HCT116 (cell line): ENCODE measurements at regions of chr9 and their contacts with region 1.

Region 1: DNA sequence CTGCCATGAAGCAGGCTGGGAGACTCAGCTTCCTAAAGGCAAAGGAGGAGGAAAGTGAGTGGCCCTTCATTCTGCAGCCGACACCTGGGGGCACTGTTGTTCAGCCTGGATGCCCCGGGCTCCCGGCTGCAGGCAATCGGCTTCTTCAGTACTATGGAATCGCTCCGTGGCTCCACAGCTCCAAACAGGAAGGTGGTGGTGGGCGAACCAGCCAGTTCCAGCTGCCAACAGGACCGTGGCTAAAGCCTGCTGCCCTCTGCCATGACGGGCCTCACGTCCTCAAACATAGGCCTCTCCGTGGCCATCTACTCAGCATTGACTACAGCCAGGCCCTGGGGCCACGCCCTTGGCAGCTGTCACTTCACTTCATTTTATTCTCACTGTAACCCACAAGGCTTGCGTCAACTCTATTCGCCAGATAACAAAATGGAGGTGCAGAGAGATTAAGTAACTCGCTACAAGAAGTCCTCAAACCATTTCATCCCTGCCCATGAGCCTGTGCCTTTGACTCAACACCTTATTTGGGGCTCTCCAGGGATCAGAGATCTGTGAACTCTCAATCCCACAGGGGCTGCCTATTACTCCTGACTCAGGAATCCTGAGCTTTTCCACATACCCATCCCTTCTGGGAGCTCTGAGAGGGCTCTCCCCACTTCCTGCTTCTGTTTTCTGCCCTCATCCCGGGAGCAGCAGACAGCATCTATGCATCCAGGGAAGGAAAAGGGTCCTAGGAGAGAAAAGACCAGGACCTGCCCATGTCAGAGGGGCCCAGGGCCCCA is 38.0 kb downstream of the PAX5 start:
- DNase-seq: peak; percentile 32
- ATAC-seq: peak; percentile 93
- H3K4me3 ChIP-seq: peak overlapping the region in 1 of 2 experiments; percentile 21; a peak in 2 of 4 replicates
- H3K27ac ChIP-seq: no peak overlapping the region
- H3K4me1 ChIP-seq: peaks cover 0 to 5% of the 10 kb centered on the region in 2 experiments; a peak in 2 of 4 replicates
- H3K27me3 ChIP-seq: no peaks in the 10 kb centered on the region
- CTCF ChIP-seq: peak; percentile 79 to 86 (median 83)
- POLR2A ChIP-seq: no peak
- RAD21 ChIP-seq: peak; percentile 94

Region 2: DNA sequence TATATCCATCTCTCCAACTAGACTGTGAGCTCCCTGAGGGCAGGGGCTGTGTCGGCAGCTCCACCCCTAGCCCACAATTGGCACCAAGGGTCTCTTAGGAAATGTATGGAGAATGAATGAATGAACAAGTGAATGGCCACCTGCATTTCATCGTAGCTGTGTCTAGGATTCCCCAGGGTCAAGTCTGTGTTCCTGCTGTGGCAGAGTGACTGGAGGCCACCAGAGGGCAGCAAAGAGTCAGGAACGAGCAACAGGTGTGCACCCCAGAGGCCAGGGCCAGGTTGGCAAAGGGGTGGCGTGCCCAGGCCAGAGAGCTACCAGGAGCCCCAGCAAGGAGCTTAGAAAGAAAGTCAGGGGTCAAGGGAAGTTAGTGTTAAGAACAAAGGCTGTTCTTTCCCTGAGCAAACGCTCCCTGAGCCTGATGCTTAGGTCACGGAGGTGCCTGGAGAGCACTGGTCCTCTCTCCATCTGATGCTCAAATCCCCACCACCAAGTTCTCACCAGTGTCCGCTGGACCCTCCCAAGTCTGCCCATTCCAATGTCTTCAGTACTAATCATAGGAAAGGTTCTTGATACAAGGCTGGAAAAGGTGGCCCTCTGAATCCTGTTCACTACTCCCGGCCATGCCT is 122.8 kb before region 1 on chr9:
- CTCF ChIA-PET with region 1: interaction called, 148 read pairs
- POLR2A ChIA-PET with region 1: interaction called, 3 read pairs
- RAD21 ChIA-PET with region 1: interaction called, 15 to 16 read pairs
- intact Hi-C with region 1: loop called (anchors 1 kb)
- DNase-seq: peak; percentile 43
- ATAC-seq: peak; percentile 99
- H3K4me3 ChIP-seq: no peak overlapping the region
- H3K27ac ChIP-seq: no peak overlapping the region
- H3K4me1 ChIP-seq: no peaks in the 10 kb centered on the region
- H3K27me3 ChIP-seq: peaks cover 18% of the 10 kb centered on the region; the same call in 1 of the 2 replicates
- CTCF ChIP-seq: peak; percentile 91 to 96 (median 92)
- POLR2A ChIP-seq: no peak
- RAD21 ChIP-seq: peak; percentile 97

Region 3: GRCh38 chr9:37239224-37239859 is 243.2 kb after region 1 on chr9:
- CTCF ChIA-PET with region 1: no interaction called
- POLR2A ChIA-PET with region 1: no interaction called
- RAD21 ChIA-PET with region 1: no interaction called
- intact Hi-C with region 1: no loop called
- DNase-seq: no peak
- ATAC-seq: no peak
- H3K4me3 ChIP-seq: no peak overlapping the region
- H3K27ac ChIP-seq: no peak overlapping the region
- H3K4me1 ChIP-seq: peaks cover 0 to 5% of the 10 kb centered on the region in 2 experiments; a peak in 2 of 4 replicates
- H3K27me3 ChIP-seq: no peaks in the 10 kb centered on the region
- CTCF ChIP-seq: no peak
- POLR2A ChIP-seq: no peak
- RAD21 ChIP-seq: no peak

Region 4: GRCh38 chr9:37262410-37262809 is 266.3 kb after region 1 on chr9:
- CTCF ChIA-PET with region 1: interaction called, 6 read pairs
- POLR2A ChIA-PET with region 1: no interaction called
- RAD21 ChIA-PET with region 1: no interaction called
- intact Hi-C with region 1: loop called (anchors 2 kb)
- DNase-seq: no peak
- ATAC-seq: no peak
- H3K4me3 ChIP-seq: no peak overlapping the region
- H3K27ac ChIP-seq: no peak overlapping the region
- H3K4me1 ChIP-seq: no peaks in the 10 kb centered on the region
- H3K27me3 ChIP-seq: no peaks in the 10 kb centered on the region
- CTCF ChIP-seq: peak; percentile 37 to 53 (median 43); a peak in 5 of 6 replicates
- POLR2A ChIP-seq: no peak
- RAD21 ChIP-seq: peak; percentile 59

Region 5: GRCh38 chr9:37364751-37365360 is 368.7 kb after region 1 on chr9:
- CTCF ChIA-PET with region 1: interaction called, 11 read pairs
- POLR2A ChIA-PET with region 1: no interaction called
- RAD21 ChIA-PET with region 1: interaction called in 1 of 2 experiments, 4 read pairs
- intact Hi-C with region 1: no loop called
- DNase-seq: no peak
- ATAC-seq: peak; percentile 89
- H3K4me3 ChIP-seq: no peak overlapping the region
- H3K27ac ChIP-seq: no peak overlapping the region
- H3K4me1 ChIP-seq: no peaks in the 10 kb centered on the region
- H3K27me3 ChIP-seq: no peaks in the 10 kb centered on the region
- CTCF ChIP-seq: peak in 2 of 3 experiments; percentile 42 to 52; a peak in 4 of 6 replicates
- POLR2A ChIP-seq: no peak
- RAD21 ChIP-seq: peak; percentile 54

Region 6: GRCh38 chr9:37410969-37411785 is 415.1 kb after region 1 on chr9:
- CTCF ChIA-PET with region 1: interaction called, 35 read pairs
- POLR2A ChIA-PET with region 1: no interaction called
- RAD21 ChIA-PET with region 1: interaction called in 1 of 2 experiments, 3 read pairs
- intact Hi-C with region 1: loop called (anchors 1 kb)
- DNase-seq: no peak
- ATAC-seq: peak; percentile 51
- H3K4me3 ChIP-seq: no peak overlapping the region
- H3K27ac ChIP-seq: no peak overlapping the region
- H3K4me1 ChIP-seq: peaks cover 0 to 25% of the 10 kb centered on the region in 2 experiments; a peak in 3 of 4 replicates
- H3K27me3 ChIP-seq: no peaks in the 10 kb centered on the region
- CTCF ChIP-seq: peak; percentile 35 to 44 (median 41); a peak in 5 of 6 replicates
- POLR2A ChIP-seq: no peak
- RAD21 ChIP-seq: peak; percentile 53